PC-3 (cell line): ENCODE measurements at regions of chr4 and their contacts with region 1.

Region 1: GRCh38 chr4:70734168-70734954 is 12.6 kb downstream of the RUFY3 start:
- DNase-seq: peak; percentile 52
- ATAC-seq: peak; percentile 86
- H3K4me3 ChIP-seq: peak overlapping the region; percentile 65
- H3K27ac ChIP-seq: 0 out of 2 replicates have a peak overlapping the region, but pooled peaks have one; percentile 1
- H3K4me1 ChIP-seq: peaks cover 19% of the 10 kb centered on the region
- H3K27me3 ChIP-seq: no peaks in the 10 kb centered on the region
- CTCF ChIP-seq: no peak

Region 2: GRCh38 chr4:70356185-70356584 is 378.2 kb before region 1 on chr4:
- CTCF ChIA-PET with region 1: no interaction called
- POLR2A ChIA-PET with region 1: no interaction called
- intact Hi-C with region 1: no loop called
- DNase-seq: no peak
- ATAC-seq: no peak
- H3K4me3 ChIP-seq: no peak overlapping the region
- H3K27ac ChIP-seq: no peak overlapping the region
- H3K4me1 ChIP-seq: no peaks in the 10 kb centered on the region
- H3K27me3 ChIP-seq: peaks cover 44% of the 10 kb centered on the region
- CTCF ChIP-seq: no peak

Region 3: DNA sequence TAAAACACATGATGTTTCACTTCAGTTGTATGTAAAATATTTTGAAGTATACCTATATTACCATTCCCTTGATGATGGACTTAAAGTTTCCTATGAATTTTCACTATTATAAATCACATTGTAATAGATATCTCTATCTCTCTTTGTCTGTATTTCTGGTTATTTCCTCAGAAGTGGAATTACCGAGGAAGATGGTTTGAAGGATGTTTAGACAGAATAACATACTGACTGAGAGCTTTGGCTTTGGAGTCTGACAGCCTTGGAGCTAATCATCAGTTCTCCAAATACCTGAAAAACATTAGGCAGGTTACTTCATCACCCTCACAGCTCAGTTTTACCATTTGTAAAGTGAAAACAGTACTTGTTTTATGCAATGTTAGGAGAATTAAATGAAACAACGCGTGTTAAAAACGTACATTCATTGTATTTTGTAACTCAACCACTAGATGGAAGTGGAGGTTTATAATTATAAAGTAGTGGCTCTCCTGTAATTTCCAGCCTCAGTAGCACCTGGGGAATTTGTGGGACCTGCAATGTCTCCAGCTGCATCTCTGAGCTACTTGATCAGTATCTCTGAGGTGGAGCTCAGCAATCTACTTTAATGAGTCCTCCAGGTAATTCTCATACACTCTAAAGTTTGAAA is 82.4 kb before region 1 on chr4:
- CTCF ChIA-PET with region 1: interaction called, 8 read pairs
- POLR2A ChIA-PET with region 1: no interaction called
- intact Hi-C with region 1: loop called (anchors 10 kb)
- DNase-seq: peak; percentile 77
- ATAC-seq: peak; percentile 74
- H3K4me3 ChIP-seq: peak overlapping the region; percentile 48; the same call in 1 of the 2 replicates
- H3K27ac ChIP-seq: no peak overlapping the region
- H3K4me1 ChIP-seq: no peaks in the 10 kb centered on the region
- H3K27me3 ChIP-seq: no peaks in the 10 kb centered on the region
- CTCF ChIP-seq: peak; percentile 85

Region 4: DNA sequence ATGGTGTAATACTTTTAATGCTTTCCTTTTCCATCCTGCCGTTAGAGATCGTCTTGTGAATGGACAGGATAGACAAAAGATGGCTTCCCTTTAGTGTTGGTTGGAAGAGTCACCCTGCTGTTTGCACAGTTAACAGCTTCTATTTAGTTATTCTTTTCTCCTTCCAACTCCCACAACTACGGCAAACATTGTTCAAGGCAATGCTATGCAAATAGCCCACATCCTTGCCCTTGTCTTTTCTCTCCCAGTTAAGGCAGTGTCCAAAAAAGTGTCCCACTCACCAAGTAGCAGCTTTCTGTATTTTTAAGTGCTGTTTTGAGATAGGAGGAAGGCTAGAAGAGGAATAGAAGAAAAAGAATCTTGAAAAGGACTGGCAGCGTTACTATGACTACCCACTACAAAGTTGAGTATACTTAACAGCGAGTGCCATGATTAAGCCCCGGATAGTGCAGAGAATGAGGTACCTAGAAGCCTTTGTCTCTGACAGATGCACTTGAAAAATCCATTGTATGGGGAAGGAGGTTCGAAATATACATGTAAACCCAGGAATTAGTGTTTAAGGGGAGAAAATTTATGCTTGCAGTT is 24.7 kb before region 1 on chr4:
- CTCF ChIA-PET with region 1: interaction called, 3 read pairs
- POLR2A ChIA-PET with region 1: no interaction called
- intact Hi-C with region 1: loop called (anchors 1 kb)
- DNase-seq: peak; percentile 73
- ATAC-seq: peak; percentile 37
- H3K4me3 ChIP-seq: peak overlapping the region; percentile 33
- H3K27ac ChIP-seq: peak overlapping the region; percentile 45
- H3K4me1 ChIP-seq: peaks cover 26% of the 10 kb centered on the region
- H3K27me3 ChIP-seq: no peaks in the 10 kb centered on the region
- CTCF ChIP-seq: no peak

Region 5: DNA sequence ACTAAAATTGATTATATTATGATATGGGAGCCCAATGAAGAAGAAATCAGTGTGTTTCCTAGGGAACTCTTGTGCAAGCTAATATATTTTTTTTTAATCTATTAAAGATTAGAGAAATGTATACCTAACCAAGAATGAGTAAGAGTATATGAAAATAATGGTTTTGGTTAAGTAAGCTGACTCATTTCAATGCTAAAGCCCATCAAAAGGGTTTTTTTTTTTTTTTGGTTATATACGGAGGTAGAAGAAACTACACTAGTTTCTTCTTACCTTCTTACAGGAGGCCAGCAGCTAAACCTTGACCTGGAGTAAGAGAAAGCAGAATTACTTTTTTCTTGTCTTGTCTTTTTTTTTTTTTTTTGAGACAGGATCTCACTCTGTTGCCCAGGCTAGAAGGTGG is 15.0 kb after region 1 on chr4:
- CTCF ChIA-PET with region 1: interaction called, 13 read pairs
- POLR2A ChIA-PET with region 1: no interaction called
- intact Hi-C with region 1: no loop called
- DNase-seq: peak; percentile 41
- ATAC-seq: peak; percentile 62; the same call in 1 of the 2 replicates
- H3K4me3 ChIP-seq: no peak overlapping the region
- H3K27ac ChIP-seq: no peak overlapping the region
- H3K4me1 ChIP-seq: 0 out of 2 replicates have a peak, but pooled peaks cover 4% of the 10 kb centered on the region
- H3K27me3 ChIP-seq: no peaks in the 10 kb centered on the region
- CTCF ChIP-seq: no peak

Region 6: GRCh38 chr4:70801265-70801809 is 67.0 kb after region 1 on chr4:
- CTCF ChIA-PET with region 1: interaction called, 4 read pairs
- POLR2A ChIA-PET with region 1: no interaction called
- intact Hi-C with region 1: loop called (anchors 10 kb)
- DNase-seq: no peak
- ATAC-seq: no peak
- H3K4me3 ChIP-seq: no peak overlapping the region
- H3K27ac ChIP-seq: no peak overlapping the region
- H3K4me1 ChIP-seq: peaks cover 13% of the 10 kb centered on the region
- H3K27me3 ChIP-seq: no peaks in the 10 kb centered on the region
- CTCF ChIP-seq: no peak

Region 7: DNA sequence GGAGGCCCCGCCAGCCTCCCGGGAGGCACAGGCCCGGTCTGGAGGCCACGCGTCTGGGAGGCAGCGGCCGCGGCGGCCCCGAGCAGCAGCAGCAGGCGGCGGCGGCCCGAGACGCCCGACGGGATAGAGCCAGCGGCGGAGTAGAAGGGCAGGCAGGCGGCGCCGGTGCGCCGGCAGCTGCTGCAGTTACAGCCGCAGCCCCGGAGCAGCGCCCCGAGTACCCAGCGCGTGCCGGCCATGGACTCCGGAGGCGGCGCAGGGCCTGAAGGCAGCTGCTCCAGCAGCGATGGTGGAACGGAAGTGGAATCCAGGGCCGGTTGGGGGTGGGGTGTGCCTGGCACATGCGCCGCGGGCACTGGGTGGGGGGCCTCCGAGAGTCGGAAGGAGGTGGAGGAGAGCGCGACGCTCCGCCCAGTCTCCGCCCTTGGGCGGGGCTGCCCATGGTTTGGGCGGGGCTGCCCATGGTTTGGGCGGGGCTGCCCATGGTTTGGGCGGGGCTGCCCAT is 105.3 kb after region 1 on chr4 and contains the start of gene GRSF1:
- CTCF ChIA-PET with region 1: interaction called, 3 read pairs
- POLR2A ChIA-PET with region 1: interaction called, 4 read pairs
- intact Hi-C with region 1: loop called (anchors 10 kb)
- DNase-seq: peak; percentile 94
- ATAC-seq: peak; percentile 83
- H3K4me3 ChIP-seq: peak within 1 kb of the TSS; percentile 96
- H3K27ac ChIP-seq: peak within 1 kb of the TSS; percentile 39
- H3K4me1 ChIP-seq: peaks cover 9% of the 10 kb centered on the region
- H3K27me3 ChIP-seq: no peaks in the 10 kb centered on the region
- CTCF ChIP-seq: no peak
- total RNA-seq, gene GRSF1: 102 and 103 TPM in 2 replicates

Region 8: GRCh38 chr4:70993181-70994068 is 259.1 kb after region 1 on chr4 and contains the start of gene DCK:
- CTCF ChIA-PET with region 1: no interaction called
- POLR2A ChIA-PET with region 1: interaction called, 22 read pairs
- intact Hi-C with region 1: no loop called
- DNase-seq: peak; percentile 95
- ATAC-seq: peak; percentile 87
- H3K4me3 ChIP-seq: peak within 1 kb of the TSS; percentile 75
- H3K27ac ChIP-seq: peak within 1 kb of the TSS; percentile 29
- H3K4me1 ChIP-seq: peaks cover 31% of the 10 kb centered on the region
- H3K27me3 ChIP-seq: no peaks in the 10 kb centered on the region
- CTCF ChIP-seq: no peak
- total RNA-seq, gene DCK: 19.5 and 21.0 TPM in 2 replicates